PC-9 (cell line): ENCODE measurements at regions of chr20 and their contacts with region 1.

Region 1: GRCh38 chr20:24100385-24101011 is 111.9 kb upstream of the GGTLC1 start:
- DNase-seq: peak; percentile 70 to 78
- H3K4me3 ChIP-seq: no peak overlapping the region
- H3K27ac ChIP-seq: peak overlapping the region; percentile 25; the same call in 1 of the 2 replicates
- H3K4me1 ChIP-seq: peaks cover 98% of the 10 kb centered on the region
- H3K27me3 ChIP-seq: no peaks in the 10 kb centered on the region
- CTCF ChIP-seq: peak; percentile 80

Region 2: DNA sequence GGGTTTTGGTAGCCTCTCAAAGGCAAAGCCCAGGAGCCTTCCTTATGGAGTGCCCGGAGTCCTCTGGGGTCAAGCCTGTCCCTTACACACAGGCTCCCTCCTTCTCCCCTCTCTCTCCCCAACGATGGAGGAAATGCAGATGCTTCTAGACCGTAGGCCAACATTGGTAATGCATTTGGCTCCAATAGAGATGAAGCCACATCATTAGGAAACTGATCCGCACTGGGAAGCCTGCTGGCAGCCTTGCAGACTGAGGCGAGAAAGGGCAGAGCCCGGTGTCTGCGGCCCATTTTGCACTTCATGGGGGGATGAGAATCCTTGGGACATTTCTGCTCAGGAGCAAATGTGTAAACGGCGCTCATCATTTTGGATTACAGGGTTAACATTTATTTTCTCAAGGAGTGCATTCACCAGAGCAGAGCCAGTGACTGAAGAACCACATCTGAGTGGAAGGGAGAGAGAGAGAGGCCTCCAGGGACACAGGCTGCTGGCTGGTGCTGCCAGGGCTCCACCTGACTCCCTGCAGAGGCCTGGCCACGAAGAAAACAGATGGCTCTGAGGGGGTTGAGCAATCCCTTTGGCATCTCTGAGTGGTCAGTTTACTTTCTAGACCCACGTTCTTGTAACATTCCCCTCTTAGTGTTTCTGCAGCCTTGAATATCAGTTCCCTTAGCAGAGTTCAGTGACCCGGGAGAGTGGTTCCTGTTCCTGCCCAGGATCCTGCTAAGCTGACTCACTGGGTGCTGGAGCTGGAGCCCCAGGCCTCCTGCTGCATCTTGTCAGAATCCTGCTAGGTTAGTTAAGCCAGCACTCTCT is 458.4 kb before region 1 on chr20:
- CTCF ChIA-PET with region 1: no interaction called
- POLR2A ChIA-PET with region 1: no interaction called
- intact Hi-C with region 1: loop called (anchors 10 kb)
- DNase-seq: peak; percentile 64 to 97
- H3K4me3 ChIP-seq: no peak overlapping the region
- H3K27ac ChIP-seq: peak overlapping the region; percentile 78
- H3K4me1 ChIP-seq: peaks cover 66% of the 10 kb centered on the region
- H3K27me3 ChIP-seq: no peaks in the 10 kb centered on the region
- CTCF ChIP-seq: no peak

Region 3: DNA sequence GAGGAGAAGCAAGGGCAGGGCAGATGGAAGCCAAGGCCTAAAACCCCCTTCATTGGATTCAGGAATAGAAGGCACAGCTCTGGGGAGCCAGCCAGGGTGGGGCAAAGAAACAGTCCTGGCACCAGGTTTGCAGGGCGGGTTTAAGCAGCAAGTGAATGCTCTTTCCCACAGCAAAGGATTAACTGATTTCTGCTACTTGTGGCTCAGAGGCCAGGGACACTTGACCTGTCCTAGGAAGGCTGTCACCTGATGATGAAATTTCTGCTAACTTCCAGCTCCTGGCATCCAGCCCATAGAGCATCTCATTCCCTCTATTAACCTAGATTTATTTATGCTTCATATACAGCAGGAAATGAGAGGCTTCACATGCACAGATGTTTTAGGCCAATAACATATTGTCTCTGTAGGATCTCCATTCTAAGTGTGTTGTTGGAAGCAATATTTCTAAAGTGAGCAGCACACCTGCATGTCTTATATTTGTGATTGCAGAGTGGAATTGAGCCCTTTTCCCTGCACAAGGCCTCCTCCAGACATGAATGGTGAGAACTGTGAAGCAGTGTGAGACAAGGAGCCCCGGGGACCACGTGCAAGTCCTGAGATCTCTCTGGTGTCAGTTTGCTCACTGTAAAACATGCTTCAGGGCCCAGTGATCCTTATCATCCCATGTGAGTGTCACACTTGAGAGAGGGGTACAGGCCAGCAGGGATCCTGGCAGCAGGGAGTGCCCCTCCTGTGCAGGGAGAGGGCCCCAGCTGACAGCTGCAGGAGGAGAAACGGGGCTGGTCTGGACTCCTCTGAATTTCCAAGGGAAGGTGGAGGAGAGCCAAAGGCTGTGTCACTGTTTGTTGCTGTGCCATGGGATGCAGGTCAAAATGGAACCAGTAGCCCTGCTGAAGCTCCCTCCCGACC is 179.8 kb before region 1 on chr20:
- CTCF ChIA-PET with region 1: no interaction called
- POLR2A ChIA-PET with region 1: interaction called, 3 read pairs
- intact Hi-C with region 1: loop called (anchors 5 kb)
- DNase-seq: no peak
- H3K4me3 ChIP-seq: no peak overlapping the region
- H3K27ac ChIP-seq: peak overlapping the region; percentile 47
- H3K4me1 ChIP-seq: peaks cover 31% of the 10 kb centered on the region
- H3K27me3 ChIP-seq: no peaks in the 10 kb centered on the region
- CTCF ChIP-seq: no peak

Region 4: GRCh38 chr20:24034820-24035219 is 65.7 kb before region 1 on chr20:
- CTCF ChIA-PET with region 1: interaction called, 9 read pairs
- POLR2A ChIA-PET with region 1: interaction called, 12 read pairs
- intact Hi-C with region 1: loop called (anchors 1 kb)
- DNase-seq: peak; percentile 89 to 98
- H3K4me3 ChIP-seq: no peak overlapping the region
- H3K27ac ChIP-seq: peak overlapping the region; percentile 52
- H3K4me1 ChIP-seq: peaks cover 41% of the 10 kb centered on the region
- H3K27me3 ChIP-seq: no peaks in the 10 kb centered on the region
- CTCF ChIP-seq: no peak

Region 5: GRCh38 chr20:24241466-24241865 is 141.0 kb after region 1 on chr20:
- CTCF ChIA-PET with region 1: no interaction called
- POLR2A ChIA-PET with region 1: no interaction called
- intact Hi-C with region 1: no loop called
- DNase-seq: no peak
- H3K4me3 ChIP-seq: no peak overlapping the region
- H3K27ac ChIP-seq: no peak overlapping the region
- H3K4me1 ChIP-seq: no peaks in the 10 kb centered on the region
- H3K27me3 ChIP-seq: no peaks in the 10 kb centered on the region
- CTCF ChIP-seq: no peak

Region 6: GRCh38 chr20:24469116-24469893 is 368.8 kb after region 1 on chr20 and contains the start of gene SYNDIG1:
- CTCF ChIA-PET with region 1: no interaction called
- POLR2A ChIA-PET with region 1: no interaction called
- intact Hi-C with region 1: no loop called
- DNase-seq: no peak
- H3K4me3 ChIP-seq: no peak within 1 kb of the TSS
- H3K27ac ChIP-seq: no peak within 1 kb of the TSS
- H3K4me1 ChIP-seq: no peaks in the 10 kb centered on the region
- H3K27me3 ChIP-seq: no peaks in the 10 kb centered on the region
- CTCF ChIP-seq: no peak
- total RNA-seq, gene SYNDIG1: 0.17 and 0.35 TPM in 2 replicates

Region 7: GRCh38 chr20:24651171-24651975 is 550.9 kb after region 1 on chr20:
- CTCF ChIA-PET with region 1: no interaction called
- POLR2A ChIA-PET with region 1: no interaction called
- intact Hi-C with region 1: loop called (anchors 10 kb)
- DNase-seq: peak; percentile 33 to 96
- H3K4me3 ChIP-seq: 0 out of 2 replicates have a peak overlapping the region, but pooled peaks have one; percentile 1
- H3K27ac ChIP-seq: peak overlapping the region; percentile 75
- H3K4me1 ChIP-seq: peaks cover 47% of the 10 kb centered on the region
- H3K27me3 ChIP-seq: no peaks in the 10 kb centered on the region
- CTCF ChIP-seq: no peak; the same call in 1 of the 2 replicates

Region 8: GRCh38 chr20:24934101-24934661 is 833.7 kb after region 1 on chr20:
- CTCF ChIA-PET with region 1: no interaction called
- POLR2A ChIA-PET with region 1: no interaction called
- intact Hi-C with region 1: loop called (anchors 5 kb)
- DNase-seq: no peak
- H3K4me3 ChIP-seq: no peak overlapping the region
- H3K27ac ChIP-seq: no peak overlapping the region
- H3K4me1 ChIP-seq: peaks cover 27% of the 10 kb centered on the region
- H3K27me3 ChIP-seq: no peaks in the 10 kb centered on the region
- CTCF ChIP-seq: no peak